ENCODE measurements at regions of chr7 and their contacts with region 1.

Region 1: GRCh38 chr7:120961638-120962173 is 11.1 kb downstream of the ING3 start:
- DNase-seq: peak; percentile 11
- ATAC-seq: peak; percentile 56; the same call in 1 of the 2 replicates
- H3K4me3 ChIP-seq: no peak overlapping the region
- H3K27ac ChIP-seq: 0 out of 2 replicates have a peak overlapping the region, but pooled peaks have one; percentile 7
- H3K4me1 ChIP-seq: 0 out of 2 replicates have a peak, but pooled peaks cover 3% of the 10 kb centered on the region
- H3K27me3 ChIP-seq: no peaks in the 10 kb centered on the region
- CTCF ChIP-seq: no peak
- POLR2A ChIP-seq: no peak
- RAD21 ChIP-seq: no peak

Region 2: GRCh38 chr7:120950539-120951308 is 11.0 kb before region 1 on chr7 and contains the start of gene ING3:
- CTCF ChIA-PET with region 1: no interaction called
- POLR2A ChIA-PET with region 1: interaction called, 4 read pairs
- dilution Hi-C with region 1: no loop called
- in situ Hi-C with region 1: no loop called
- intact Hi-C with region 1: loop called (anchors 1 kb)
- DNase-seq: peak; percentile 97
- ATAC-seq: peak; percentile 97
- H3K4me3 ChIP-seq: peak within 1 kb of the TSS; percentile 89
- H3K27ac ChIP-seq: peak within 1 kb of the TSS; percentile 99
- H3K4me1 ChIP-seq: peaks cover 2% of the 10 kb centered on the region; the same call in 1 of the 2 replicates
- H3K27me3 ChIP-seq: 0 out of 2 replicates have a peak, but pooled peaks cover 2% of the 10 kb centered on the region
- CTCF ChIP-seq: no peak
- POLR2A ChIP-seq: peak; percentile 89
- RAD21 ChIP-seq: no peak
- total RNA-seq, gene ING3: 11.3 and 14.4 TPM in 2 replicates